ENCODE measurements at regions of chr1 and their contacts with region 1.

Region 1: DNA sequence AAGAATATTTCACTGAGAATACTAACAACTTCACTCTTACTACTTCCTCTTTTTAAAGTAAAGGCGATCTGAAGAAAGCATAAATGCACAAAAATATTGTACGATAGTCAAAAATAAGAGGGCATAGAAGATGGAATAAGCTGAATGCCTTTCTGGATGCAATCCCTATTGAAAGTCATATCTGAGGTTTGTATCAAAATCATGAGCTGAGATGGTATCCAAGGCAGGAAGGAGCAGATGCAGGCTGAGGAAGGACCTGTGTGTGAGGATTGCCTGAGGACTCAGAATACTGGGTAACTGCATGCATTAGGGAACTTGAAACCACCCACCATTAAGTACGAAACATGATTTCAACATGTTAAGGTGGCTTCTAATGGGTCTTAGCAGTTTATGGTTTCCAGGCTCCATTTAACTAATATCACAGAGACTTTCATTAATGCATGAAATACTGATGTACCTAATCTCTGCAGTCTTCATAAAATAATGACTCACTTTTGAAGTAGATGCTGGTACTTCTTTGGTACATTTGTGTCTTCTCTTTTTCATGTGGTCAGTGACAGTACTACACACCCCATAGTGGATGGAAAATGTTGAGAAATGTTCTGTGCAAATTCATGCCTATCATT is 29.6 kb upstream of the RGS1 start:
- DNase-seq: no peak
- H3K4me3 Mint-ChIP-seq: no peak overlapping the region
- H3K27ac Mint-ChIP-seq: no peak overlapping the region
- H3K4me1 Mint-ChIP-seq: peaks cover 33% of the 10 kb centered on the region
- H3K27me3 Mint-ChIP-seq: no peaks in the 10 kb centered on the region

Region 2: GRCh38 chr1:192530254-192530653 is 15.8 kb before region 1 on chr1:
- CTCF ChIA-PET with region 1: no interaction called
- intact Hi-C with region 1: loop called (anchors 1 kb)
- DNase-seq: no peak
- H3K4me3 Mint-ChIP-seq: no peak overlapping the region
- H3K27ac Mint-ChIP-seq: no peak overlapping the region
- H3K4me1 Mint-ChIP-seq: peaks cover 20% of the 10 kb centered on the region
- H3K27me3 Mint-ChIP-seq: no peaks in the 10 kb centered on the region

Measured in activated naive CD4-positive, alpha-beta T cell treated with anti-CD3 and anti-CD28 coated beads for 36 hours (primary cell).